AG04450 (cell line): ENCODE measurements at regions of chr11 and their contacts with region 1.

Region 1: GRCh38 chr11:3854977-3855807 is at the start of gene STIM1:
- DNase-seq: peak; percentile 83
- H3K4me3 ChIP-seq: peak within 1 kb of the TSS; percentile 85
- H3K27ac ChIP-seq: peak within 1 kb of the TSS; percentile 73
- H3K27me3 ChIP-seq: no peaks in the 10 kb centered on the region
- CTCF ChIP-seq: peak; percentile 87
- polyA plus RNA-seq, gene STIM1: 19.7 and 23.4 TPM in 2 replicates

Region 2: GRCh38 chr11:3675971-3676370 is 179.2 kb before region 1 on chr11:
- CTCF ChIA-PET with region 1: no interaction called
- POLR2A ChIA-PET with region 1: no interaction called
- DNase-seq: no peak
- H3K4me3 ChIP-seq: no peak overlapping the region
- H3K27ac ChIP-seq: no peak overlapping the region
- H3K27me3 ChIP-seq: no peaks in the 10 kb centered on the region
- CTCF ChIP-seq: no peak

Region 3: DNA sequence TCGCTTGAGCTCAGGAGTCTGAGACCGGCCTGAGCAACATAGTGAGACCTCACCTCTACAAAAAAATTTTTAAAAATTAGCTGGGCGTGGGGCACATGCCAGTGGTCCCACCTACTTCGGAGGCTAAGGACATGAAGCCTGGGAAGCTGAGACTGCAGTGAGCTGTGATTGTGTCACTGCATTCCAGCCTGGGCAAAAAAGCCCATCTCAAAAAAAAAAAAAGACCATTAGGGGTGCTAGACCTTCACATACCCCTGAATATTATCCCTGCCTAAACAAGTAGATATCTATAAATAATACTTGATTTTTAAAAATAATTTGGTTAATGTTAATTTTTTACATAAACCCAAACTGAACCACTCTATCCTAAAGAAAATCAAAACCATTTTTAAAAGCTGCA is 82.0 kb before region 1 on chr11:
- CTCF ChIA-PET with region 1: no interaction called
- POLR2A ChIA-PET with region 1: no interaction called
- DNase-seq: no peak
- H3K4me3 ChIP-seq: no peak overlapping the region
- H3K27ac ChIP-seq: no peak overlapping the region
- H3K27me3 ChIP-seq: no peaks in the 10 kb centered on the region
- CTCF ChIP-seq: no peak

Region 4: GRCh38 chr11:3824714-3825472 is 30.3 kb before region 1 on chr11:
- CTCF ChIA-PET with region 1: interaction called, 10 read pairs
- POLR2A ChIA-PET with region 1: no interaction called
- DNase-seq: no peak
- H3K4me3 ChIP-seq: no peak overlapping the region
- H3K27ac ChIP-seq: peak overlapping the region; percentile 11
- H3K27me3 ChIP-seq: no peaks in the 10 kb centered on the region
- CTCF ChIP-seq: peak; percentile 53

Region 5: DNA sequence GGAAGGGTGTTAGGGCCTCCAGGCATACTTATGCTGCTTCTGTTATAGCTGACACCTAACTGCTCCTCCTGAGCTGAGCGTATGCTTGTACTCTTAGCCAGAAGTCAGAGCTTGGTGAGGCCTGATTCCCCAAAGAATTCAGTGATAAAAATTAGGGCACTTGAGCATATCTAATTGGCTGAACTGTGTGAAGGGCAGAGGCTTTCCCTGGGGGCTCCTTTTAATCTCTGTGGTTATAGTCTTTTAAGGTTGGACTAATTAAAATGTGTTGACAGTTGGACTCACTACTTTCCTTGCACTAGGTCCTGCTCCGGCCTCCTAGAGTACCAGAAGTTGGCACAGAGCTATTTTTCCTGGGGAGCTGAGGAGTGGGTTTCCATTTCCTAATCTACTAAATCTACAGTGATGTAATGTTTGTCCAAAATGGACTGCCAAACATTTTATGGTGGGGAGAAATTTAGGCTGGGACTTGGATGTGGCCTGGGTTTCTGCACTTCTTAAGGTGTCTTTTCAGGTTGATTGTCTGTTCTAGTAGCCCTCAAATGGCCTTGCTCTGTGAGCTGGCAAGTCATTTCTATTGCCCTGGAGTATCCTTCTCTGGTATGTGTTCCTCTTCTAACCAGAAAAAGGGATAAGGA is 18.6 kb after region 1 on chr11:
- CTCF ChIA-PET with region 1: interaction called, 38 read pairs
- POLR2A ChIA-PET with region 1: no interaction called
- DNase-seq: no peak
- H3K4me3 ChIP-seq: no peak overlapping the region
- H3K27ac ChIP-seq: no peak overlapping the region
- H3K27me3 ChIP-seq: no peaks in the 10 kb centered on the region
- CTCF ChIP-seq: no peak

Region 6: GRCh38 chr11:3927133-3927796 is 72.1 kb after region 1 on chr11:
- CTCF ChIA-PET with region 1: interaction called, 11 read pairs
- POLR2A ChIA-PET with region 1: no interaction called
- DNase-seq: no peak
- H3K4me3 ChIP-seq: no peak overlapping the region
- H3K27ac ChIP-seq: no peak overlapping the region
- H3K27me3 ChIP-seq: no peaks in the 10 kb centered on the region
- CTCF ChIP-seq: no peak

Region 7: DNA sequence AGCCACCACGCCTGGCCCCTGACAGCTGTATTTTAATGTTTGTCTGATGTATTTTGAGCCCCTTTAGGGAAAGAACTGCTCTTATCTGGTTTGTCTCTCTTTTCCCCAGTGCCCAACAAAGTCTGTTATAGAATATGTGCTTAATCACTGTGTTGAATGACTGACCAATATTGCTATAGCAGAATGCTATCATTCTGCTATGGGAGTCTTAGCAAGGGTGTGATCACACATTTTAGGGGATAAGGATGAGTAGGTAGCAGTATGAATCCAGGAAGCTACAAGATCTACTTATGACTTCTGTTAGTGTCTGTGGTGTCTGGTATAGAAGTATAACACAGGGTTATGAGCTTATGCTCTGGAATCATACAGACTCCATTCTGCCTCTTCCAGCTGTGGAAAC is 121.9 kb after region 1 on chr11:
- CTCF ChIA-PET with region 1: interaction called, 21 read pairs
- POLR2A ChIA-PET with region 1: no interaction called
- DNase-seq: no peak
- H3K4me3 ChIP-seq: no peak overlapping the region
- H3K27ac ChIP-seq: no peak overlapping the region
- H3K27me3 ChIP-seq: no peaks in the 10 kb centered on the region
- CTCF ChIP-seq: no peak

Region 8: GRCh38 chr11:4017129-4017528 is 161.9 kb after region 1 on chr11:
- CTCF ChIA-PET with region 1: no interaction called
- POLR2A ChIA-PET with region 1: no interaction called
- DNase-seq: no peak
- H3K4me3 ChIP-seq: no peak overlapping the region
- H3K27ac ChIP-seq: no peak overlapping the region
- H3K27me3 ChIP-seq: no peaks in the 10 kb centered on the region
- CTCF ChIP-seq: no peak

Region 9: GRCh38 chr11:4039011-4039410 is 183.8 kb after region 1 on chr11:
- CTCF ChIA-PET with region 1: interaction called, 15 read pairs
- POLR2A ChIA-PET with region 1: interaction called, 3 read pairs
- DNase-seq: no peak
- H3K4me3 ChIP-seq: no peak overlapping the region
- H3K27ac ChIP-seq: no peak overlapping the region
- H3K27me3 ChIP-seq: no peaks in the 10 kb centered on the region
- CTCF ChIP-seq: no peak

Region 10: DNA sequence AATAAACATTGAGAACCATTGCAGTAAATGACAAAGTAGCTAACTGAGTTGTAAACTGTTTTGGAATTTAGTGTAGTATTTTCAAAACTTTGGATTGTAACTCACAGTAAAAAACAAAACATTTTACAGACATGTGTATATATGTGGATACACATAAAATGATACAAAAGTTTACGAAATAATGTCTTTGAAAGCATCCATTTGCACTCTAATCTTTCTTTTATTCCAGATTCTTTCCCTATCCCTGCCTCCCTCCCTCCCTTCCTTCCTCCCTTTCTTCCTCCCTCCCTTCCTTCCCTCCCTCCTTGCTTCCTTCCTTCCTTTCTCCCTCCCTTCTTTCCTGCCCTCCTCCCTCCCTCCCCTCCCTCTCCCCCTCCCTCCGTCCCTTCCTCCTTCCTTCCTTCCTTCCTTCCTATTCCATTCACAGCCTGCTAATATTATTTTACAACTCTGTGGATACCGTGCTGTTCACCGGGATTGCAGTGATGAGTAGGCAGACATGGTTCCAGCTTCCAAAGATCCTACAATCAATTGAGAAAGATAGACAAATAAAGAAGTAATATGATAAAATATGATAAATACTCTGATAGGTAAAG is 242.9 kb after region 1 on chr11:
- CTCF ChIA-PET with region 1: interaction called, 10 read pairs
- POLR2A ChIA-PET with region 1: no interaction called
- DNase-seq: no peak
- H3K4me3 ChIP-seq: no peak overlapping the region
- H3K27ac ChIP-seq: no peak overlapping the region
- H3K27me3 ChIP-seq: no peaks in the 10 kb centered on the region
- CTCF ChIP-seq: no peak